ENCODE measurements at regions of chr6 and their contacts with region 1.

Region 1: DNA sequence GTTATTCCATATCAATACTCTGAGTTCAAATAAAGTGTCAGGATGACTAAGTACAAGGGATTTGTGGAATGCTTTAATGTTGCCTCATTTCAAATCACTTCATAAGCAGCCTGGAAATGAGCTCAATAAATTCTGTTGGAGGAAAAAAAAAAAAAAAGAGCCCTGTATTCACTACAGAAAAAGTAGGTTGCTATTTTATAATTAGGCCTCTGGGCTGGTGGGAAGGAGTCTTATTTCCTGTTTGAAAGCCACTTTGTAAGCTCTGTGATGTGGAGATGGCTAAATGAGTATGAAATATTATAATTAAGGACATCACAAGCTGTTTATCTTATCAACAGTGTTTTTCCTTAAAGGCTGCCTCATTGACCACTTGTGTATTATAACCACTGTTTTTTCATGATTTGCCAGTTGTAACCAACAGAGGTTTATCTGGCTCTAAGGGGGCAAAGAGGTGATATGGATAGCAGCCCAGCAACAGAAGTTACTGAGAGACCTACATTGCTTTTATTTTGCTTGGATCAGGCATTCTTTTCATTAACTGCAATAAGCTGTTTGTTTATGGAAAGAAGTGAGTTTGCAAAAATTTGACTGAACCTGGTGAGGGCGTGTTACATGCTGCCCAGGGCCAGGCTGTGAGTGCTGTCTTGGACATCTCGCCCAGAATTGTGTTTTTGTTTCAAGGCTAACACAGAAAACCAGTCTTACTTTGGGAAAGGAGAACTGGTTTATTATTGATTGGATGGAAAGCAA is 563.3 kb upstream of the MAP3K7 start:
- DNase-seq: no peak
- H3K4me3 ChIP-seq: no peak overlapping the region
- H3K27ac ChIP-seq: no peak overlapping the region
- H3K4me1 ChIP-seq: no peaks in the 10 kb centered on the region
- H3K27me3 ChIP-seq: no peaks in the 10 kb centered on the region
- CTCF ChIP-seq: no peak
- POLR2A ChIP-seq: no peak

Region 2: GRCh38 chr6:91299544-91300491 is 149.7 kb after region 1 on chr6:
- intact Hi-C with region 1: loop called (anchors 5 kb)
- DNase-seq: peak; percentile 60
- H3K4me3 ChIP-seq: no peak overlapping the region
- H3K27ac ChIP-seq: peak overlapping the region; percentile 63 to 76
- H3K4me1 ChIP-seq: no peaks in the 10 kb centered on the region
- H3K27me3 ChIP-seq: no peaks in the 10 kb centered on the region
- CTCF ChIP-seq: no peak
- POLR2A ChIP-seq: no peak